ENCODE measurements at regions of chr6 and their contacts with region 1.

Region 1: DNA sequence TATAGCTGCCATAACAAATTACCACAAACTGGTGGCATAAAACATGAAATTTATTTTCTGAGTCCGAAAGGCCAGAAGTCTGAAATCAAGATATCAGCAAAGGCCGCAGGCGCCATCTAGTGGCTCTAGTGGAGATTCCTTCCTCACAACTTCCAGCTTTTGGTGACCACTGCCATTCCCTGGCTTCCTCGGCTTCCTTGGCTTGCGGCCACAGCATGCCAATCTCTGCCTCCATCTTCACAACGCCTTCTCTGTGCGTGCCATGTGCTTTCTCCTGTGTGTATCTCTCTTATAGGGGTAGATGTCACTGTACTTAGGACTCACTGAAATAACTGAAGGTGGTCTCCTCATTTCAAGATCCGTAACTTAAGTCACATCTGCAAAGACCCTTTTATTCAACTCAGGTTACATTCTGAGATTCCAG is 5.4 kb upstream of the PLAGL1 start:
- ATAC-seq: peak in 4 of 8 experiments; percentile 18 to 79 (median 76)
- H3K4me3 ChIP-seq: no peak overlapping the region
- H3K27ac ChIP-seq: no peak overlapping the region
- H3K4me1 ChIP-seq: no peaks in the 10 kb centered on the region

Region 2: DNA sequence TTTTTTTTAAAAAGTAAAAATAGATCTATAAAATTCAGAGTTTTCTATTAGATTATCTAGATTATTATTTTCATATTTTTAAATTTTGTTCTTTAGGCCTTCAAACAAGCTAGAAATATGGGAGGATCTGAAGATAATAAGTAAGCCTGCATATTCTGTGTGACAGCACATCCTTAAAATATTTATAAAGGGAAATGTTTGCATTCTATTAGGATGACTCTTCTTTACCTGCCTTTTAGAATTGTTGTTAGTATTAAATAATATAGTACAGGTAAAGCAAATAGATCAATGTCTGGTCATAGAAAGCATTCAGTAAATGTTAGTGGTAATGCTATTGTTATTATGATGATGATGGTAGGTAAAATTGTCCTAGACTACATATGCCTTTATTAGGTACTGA is 545.5 kb before region 1 on chr6:
- in situ Hi-C with region 1: no loop called
- ATAC-seq: no peak
- H3K4me3 ChIP-seq: no peak overlapping the region
- H3K27ac ChIP-seq: no peak overlapping the region
- H3K4me1 ChIP-seq: no peaks in the 10 kb centered on the region

Region 3: GRCh38 chr6:143556529-143556928 is 457.0 kb before region 1 on chr6:
- in situ Hi-C with region 1: loop called in 1 of 9 experiments (anchors 25 kb)
- ATAC-seq: no peak
- H3K4me3 ChIP-seq: no peak overlapping the region
- H3K27ac ChIP-seq: no peak overlapping the region
- H3K4me1 ChIP-seq: no peaks in the 10 kb centered on the region

Region 4: GRCh38 chr6:143575440-143575839 is 438.1 kb before region 1 on chr6:
- in situ Hi-C with region 1: loop called in 7 of 9 experiments (anchors 10 to 25 kb)
- ATAC-seq: peak; percentile 68 to 80 (median 77)
- H3K4me3 ChIP-seq: no peak overlapping the region
- H3K27ac ChIP-seq: no peak overlapping the region
- H3K4me1 ChIP-seq: no peaks in the 10 kb centered on the region

Region 5: GRCh38 chr6:144482142-144482541 is 468.6 kb after region 1 on chr6:
- in situ Hi-C with region 1: no loop called
- ATAC-seq: peak in 7 of 8 experiments; percentile 38 to 74 (median 65)
- H3K4me3 ChIP-seq: no peak overlapping the region
- H3K27ac ChIP-seq: no peak overlapping the region
- H3K4me1 ChIP-seq: no peaks in the 10 kb centered on the region